Dorsolateral prefrontal cortex (tissue), 120 donors: ENCODE measurements at regions of chr12 and their contacts with region 1.

Region 1: DNA sequence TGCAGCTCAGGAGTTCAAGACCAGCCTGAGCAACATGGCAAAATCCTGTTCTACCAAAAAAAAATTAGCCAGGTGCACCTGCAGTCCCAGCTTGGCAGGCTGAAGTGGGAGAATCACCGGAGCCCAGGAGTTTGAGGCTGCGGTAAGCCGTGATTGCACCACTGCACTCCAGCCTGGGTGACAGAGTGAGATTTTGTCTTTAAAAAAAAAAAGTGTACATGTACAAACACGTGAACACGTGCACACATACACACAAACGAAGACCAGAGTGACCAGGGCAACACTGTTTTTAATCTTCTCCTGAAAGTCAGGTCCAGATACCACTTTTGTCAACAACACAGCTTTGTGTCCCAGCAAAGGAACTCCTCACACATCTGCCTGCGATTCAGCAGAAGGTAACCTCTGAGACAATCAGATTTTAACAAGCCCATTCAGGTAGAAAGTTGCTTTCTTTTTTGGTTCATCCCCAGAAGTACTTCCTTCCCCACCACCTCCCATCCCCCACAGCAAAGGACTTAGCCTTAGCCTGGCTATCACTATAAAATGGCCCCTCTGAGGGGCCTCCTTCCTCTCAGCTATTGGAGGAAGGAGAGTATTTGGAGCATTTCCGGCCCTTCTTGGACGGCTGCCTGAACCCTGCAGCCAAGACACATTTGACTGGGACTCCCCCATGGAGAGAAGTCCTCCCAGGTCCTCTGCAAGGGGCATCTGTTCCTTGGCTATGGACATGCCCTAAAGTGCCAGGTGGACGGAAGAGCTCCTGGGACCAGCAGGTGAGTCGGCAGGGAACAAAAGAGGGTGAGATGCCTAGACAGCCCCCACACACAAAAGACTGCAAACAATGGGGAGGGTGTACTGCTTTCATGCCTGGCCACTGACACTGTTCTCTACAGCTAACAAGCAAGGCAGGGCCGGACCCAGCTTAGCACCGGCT is 9.8 kb downstream of the CTDSP2 start:
- DNase-seq: peak in 3 of 10 donors; percentile 28 to 92 (median 55)
- H3K4me3 ChIP-seq: peak overlapping the region in 49 of 59 donors; percentile 0 to 50 (median 28)
- H3K27ac ChIP-seq: peak overlapping the region in 52 of 59 donors; percentile 13 to 100 (median 60)
- H3K27me3 ChIP-seq: no peaks in the 10 kb centered on the region
- CTCF ChIP-seq: no peak

Region 2: GRCh38 chr12:57904848-57905811 is 68.4 kb after region 1 on chr12:
- intact Hi-C with region 1: loop called (anchors 1 to 2 kb)
- DNase-seq: peak; percentile 67 to 88 (median 82)
- H3K4me3 ChIP-seq: peak overlapping the region in 53 of 59 donors; percentile 6 to 58 (median 39)
- H3K27ac ChIP-seq: peak overlapping the region in 25 of 59 donors; percentile 4 to 75 (median 43)
- H3K27me3 ChIP-seq: no peaks in the 10 kb centered on the region
- CTCF ChIP-seq: peak; percentile 96 to 100 (median 100)

Region 3: DNA sequence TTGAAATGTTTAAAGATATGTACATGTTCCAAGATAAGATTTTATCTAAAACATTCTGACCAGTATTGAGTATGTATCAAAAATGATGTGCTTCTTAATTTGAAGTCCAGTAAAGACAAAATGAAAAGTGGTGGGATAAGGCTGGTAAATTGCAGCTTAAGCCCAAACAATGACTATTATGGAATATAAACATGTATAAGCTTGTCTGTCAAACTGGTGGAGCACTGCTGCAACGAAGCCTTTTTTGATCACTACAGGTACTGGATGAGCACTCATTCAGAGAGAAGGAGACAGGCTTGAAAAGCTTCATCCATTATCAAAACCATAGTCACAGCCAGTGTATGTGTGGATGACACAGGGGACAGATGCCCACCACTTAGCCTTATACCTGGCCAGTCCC is 243.1 kb after region 1 on chr12:
- intact Hi-C with region 1: no loop called
- DNase-seq: no peak
- H3K4me3 ChIP-seq: no peak overlapping the region
- H3K27ac ChIP-seq: no peak overlapping the region
- H3K27me3 ChIP-seq: peaks cover 0 to 35% (median 0%) of the 10 kb centered on the region in 45 donors
- CTCF ChIP-seq: no peak